Colonic mucosa (tissue), 4 donors: ENCODE measurements at regions of chr11 and their contacts with region 1.

Region 1: GRCh38 chr11:63687845-63688244 is 6.5 kb downstream of the RTN3 start:
- DNase-seq: no peak
- H3K4me3 ChIP-seq: no peak overlapping the region
- H3K27ac ChIP-seq: no peak overlapping the region
- H3K4me1 ChIP-seq: no peaks in the 10 kb centered on the region
- H3K27me3 ChIP-seq: no peaks in the 10 kb centered on the region
- CTCF ChIP-seq: no peak

Region 2: DNA sequence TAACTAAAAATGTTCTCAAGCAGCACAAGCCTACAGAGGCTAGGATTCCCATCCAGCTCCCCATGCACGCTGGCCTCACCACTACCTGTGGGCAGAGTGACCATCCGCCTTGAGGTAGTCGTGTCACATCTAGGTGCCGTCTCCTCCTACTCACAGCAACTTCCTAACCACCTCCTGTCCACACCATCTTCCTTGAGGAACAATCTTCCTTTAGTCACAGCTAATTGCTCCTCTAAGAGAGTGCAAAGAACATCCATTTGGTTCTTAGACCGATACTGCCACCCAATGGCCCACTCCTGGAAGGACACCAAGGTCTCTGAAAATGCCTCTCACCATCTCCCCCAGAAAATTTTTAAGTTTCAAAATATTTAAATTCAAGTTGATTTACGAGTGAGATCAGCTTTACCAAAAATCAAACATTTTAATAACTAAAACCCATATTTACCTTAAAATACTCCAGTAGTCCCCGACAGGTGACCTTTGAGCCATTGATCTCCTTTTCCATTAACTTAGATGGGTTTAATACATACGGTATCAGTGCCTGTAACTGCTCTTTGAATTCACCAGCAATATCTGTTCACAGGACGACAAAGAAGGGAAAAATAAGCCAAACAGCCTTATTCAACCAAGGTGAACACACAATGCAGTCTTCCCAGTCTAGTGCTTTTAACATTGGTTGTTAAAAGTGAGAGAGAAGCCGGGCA is 51.9 kb before region 1 on chr11:
- intact Hi-C with region 1: no loop called
- DNase-seq: peak; percentile 66
- H3K4me3 ChIP-seq: no peak overlapping the region
- H3K27ac ChIP-seq: no peak overlapping the region
- H3K4me1 ChIP-seq: peaks cover 2% of the 10 kb centered on the region
- H3K27me3 ChIP-seq: no peaks in the 10 kb centered on the region
- CTCF ChIP-seq: peak; percentile 89

Region 3: DNA sequence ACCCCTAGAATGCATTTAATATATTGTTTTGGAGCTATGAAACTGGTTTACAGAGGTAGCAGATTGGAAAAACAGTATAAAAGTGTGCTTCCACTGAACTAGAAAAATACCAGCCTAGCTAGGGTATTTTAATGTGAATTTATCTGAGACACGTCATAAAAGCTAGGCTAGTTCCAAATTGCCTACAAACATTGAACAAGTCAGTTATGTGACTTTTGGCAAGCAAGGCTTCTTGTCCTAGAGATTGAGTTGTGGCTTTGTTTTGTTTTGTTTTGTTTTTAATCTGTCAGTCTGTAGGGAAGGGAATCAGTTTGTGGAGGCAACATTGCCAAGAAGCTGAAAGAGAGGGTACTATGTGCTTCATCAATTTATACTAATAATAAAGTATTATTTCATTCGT is 17.7 kb after region 1 on chr11:
- intact Hi-C with region 1: loop called (anchors 2 kb)
- DNase-seq: no peak
- H3K4me3 ChIP-seq: no peak overlapping the region
- H3K27ac ChIP-seq: no peak overlapping the region
- H3K4me1 ChIP-seq: no peaks in the 10 kb centered on the region
- H3K27me3 ChIP-seq: no peaks in the 10 kb centered on the region
- CTCF ChIP-seq: no peak

Region 4: DNA sequence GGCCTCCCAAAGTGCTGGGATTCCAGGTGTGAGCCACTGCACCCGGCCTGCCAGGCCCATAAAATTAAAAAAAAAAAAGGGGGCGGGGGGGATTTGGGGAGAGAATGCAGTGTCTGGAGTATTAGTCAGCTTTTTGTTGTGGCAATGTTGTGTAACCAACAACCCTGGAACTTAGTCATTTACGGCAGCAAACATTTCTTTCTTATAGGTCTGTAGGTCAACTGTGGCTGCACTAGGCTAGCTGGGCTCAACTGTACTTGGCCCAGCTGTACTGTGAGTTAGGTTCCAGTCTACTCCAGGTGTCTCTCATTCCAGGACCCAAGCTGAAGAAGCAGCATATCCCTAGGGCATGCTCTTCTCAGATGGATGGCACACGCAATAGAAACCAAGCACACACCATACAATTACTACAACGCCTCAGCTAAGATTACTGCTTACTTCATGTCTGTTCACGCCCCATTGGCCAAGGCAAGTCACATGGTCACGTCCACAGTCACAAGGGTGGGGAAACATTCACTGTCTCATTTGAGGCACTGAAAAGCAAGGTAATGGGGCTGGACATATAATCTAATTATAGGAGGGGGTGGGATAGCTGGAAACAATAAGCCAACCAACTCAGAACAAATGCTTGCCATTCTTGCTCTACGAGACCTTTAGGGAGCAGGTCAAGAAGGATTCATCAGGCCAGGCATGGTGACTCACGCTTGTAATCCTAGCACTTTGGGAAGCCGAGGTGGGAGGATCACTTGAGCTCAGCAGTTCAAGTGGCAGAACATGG is 115.0 kb after region 1 on chr11:
- intact Hi-C with region 1: no loop called
- DNase-seq: peak; percentile 36
- H3K4me3 ChIP-seq: no peak overlapping the region
- H3K27ac ChIP-seq: peak overlapping the region; percentile 61
- H3K4me1 ChIP-seq: peaks cover 3% of the 10 kb centered on the region
- H3K27me3 ChIP-seq: no peaks in the 10 kb centered on the region
- CTCF ChIP-seq: no peak